ENCODE measurements at regions of chr2 and their contacts with region 1.

Region 1: GRCh38 chr2:75608684-75609333 is 37.8 kb upstream of the MRPL19 start:
- DNase-seq: peak; percentile 53 to 80
- H3K4me3 ChIP-seq: peak overlapping the region; percentile 26
- H3K4me1 ChIP-seq: peaks cover 6% of the 10 kb centered on the region; the same call in 1 of the 2 replicates
- H3K27me3 ChIP-seq: no peaks in the 10 kb centered on the region

Region 2: DNA sequence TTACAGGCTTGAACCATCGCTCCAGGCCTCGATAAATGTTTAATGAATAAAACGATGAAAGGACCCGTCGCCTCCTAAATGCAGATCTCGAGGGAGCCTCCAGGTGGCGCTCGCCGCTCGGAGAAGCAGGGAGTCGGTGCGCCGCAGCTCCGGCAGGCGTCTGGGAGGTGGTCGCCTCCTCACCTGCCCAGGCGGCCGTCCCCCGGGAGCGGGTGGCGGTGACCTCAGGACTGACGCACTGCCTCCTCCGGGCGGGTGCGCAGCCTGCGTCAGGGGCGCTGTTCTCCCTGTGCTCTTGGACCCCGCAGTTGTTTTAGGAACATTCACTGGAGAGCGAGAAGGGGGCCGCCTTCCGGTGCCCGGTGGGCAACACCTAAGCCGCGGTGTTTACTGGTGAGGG is 689.0 kb before region 1 on chr2:
- in situ Hi-C with region 1: loop called (anchors 10 kb)
- DNase-seq: peak; percentile 65 to 88
- H3K4me3 ChIP-seq: peak overlapping the region; percentile 36
- H3K4me1 ChIP-seq: no peaks in the 10 kb centered on the region
- H3K27me3 ChIP-seq: no peaks in the 10 kb centered on the region

Region 3: DNA sequence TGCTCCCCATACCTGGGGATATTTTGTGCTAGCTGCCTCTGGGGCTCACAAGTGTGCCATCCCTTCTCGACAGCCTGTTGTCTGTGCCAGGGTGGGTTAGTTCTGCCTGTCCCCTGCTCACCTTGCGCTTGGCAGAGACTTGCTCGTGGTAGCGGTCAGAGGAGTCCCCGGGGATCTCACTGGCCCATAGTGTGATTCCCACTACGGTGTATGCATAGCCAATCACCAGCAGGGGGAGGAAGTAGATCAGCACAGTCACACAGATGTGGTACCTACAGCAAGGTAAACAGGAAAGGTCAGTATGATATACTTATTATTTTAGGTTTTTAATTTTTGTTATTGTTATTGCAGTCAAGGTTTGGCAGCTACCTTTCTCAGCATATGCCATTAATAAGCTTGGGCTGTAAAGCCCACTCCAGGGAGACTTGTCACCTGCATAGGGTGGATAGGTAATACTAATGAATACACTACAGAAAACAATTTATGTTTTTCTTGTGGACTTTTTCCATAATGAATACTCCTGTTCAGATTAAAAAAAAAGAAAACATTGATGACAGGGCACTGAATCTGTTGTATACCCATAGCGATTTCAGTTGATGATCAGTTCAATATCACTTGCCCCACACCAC is 555.2 kb before region 1 on chr2:
- in situ Hi-C with region 1: loop called (anchors 10 kb)
- DNase-seq: peak; percentile 63 to 73
- H3K4me3 ChIP-seq: no peak overlapping the region
- H3K4me1 ChIP-seq: peaks cover 23% of the 10 kb centered on the region
- H3K27me3 ChIP-seq: no peaks in the 10 kb centered on the region

Region 4: GRCh38 chr2:75199428-75200011 is 409.3 kb before region 1 on chr2 and contains the start of gene TACR1:
- in situ Hi-C with region 1: loop called (anchors 25 kb)
- DNase-seq: peak; percentile 26 to 76
- H3K4me3 ChIP-seq: peak within 1 kb of the TSS; percentile 14
- H3K4me1 ChIP-seq: peaks cover 4% of the 10 kb centered on the region; the same call in 1 of the 2 replicates
- H3K27me3 ChIP-seq: peaks cover 70% of the 10 kb centered on the region

Region 5: GRCh38 chr2:75466708-75467311 is 142.0 kb before region 1 on chr2:
- in situ Hi-C with region 1: loop called (anchors 5 kb)
- DNase-seq: peak; percentile 74 to 87
- H3K4me3 ChIP-seq: no peak overlapping the region
- H3K4me1 ChIP-seq: peaks cover 15% of the 10 kb centered on the region
- H3K27me3 ChIP-seq: no peaks in the 10 kb centered on the region

Region 6: GRCh38 chr2:75729861-75730260 is 121.1 kb after region 1 on chr2:
- in situ Hi-C with region 1: no loop called
- DNase-seq: peak; percentile 23 to 70
- H3K4me3 ChIP-seq: no peak overlapping the region
- H3K4me1 ChIP-seq: no peaks in the 10 kb centered on the region
- H3K27me3 ChIP-seq: no peaks in the 10 kb centered on the region

Measured in HAP-1 (cell line).